ENCODE measurements at regions of chr9 and their contacts with region 1.

Region 1: GRCh38 chr9:34591248-34591916 is 1.9 kb upstream of the CNTFR start:
- DNase-seq: peak; percentile 68
- H3K4me3 Mint-ChIP-seq: no peak overlapping the region
- H3K27ac Mint-ChIP-seq: no peak overlapping the region
- H3K4me1 Mint-ChIP-seq: peaks cover 20% of the 10 kb centered on the region
- H3K27me3 Mint-ChIP-seq: peaks cover 59% of the 10 kb centered on the region
- CTCF ChIP-seq: peak; percentile 94

Region 2: GRCh38 chr9:34437006-34437925 is 154.1 kb before region 1 on chr9:
- CTCF ChIA-PET with region 1: interaction called, 22 read pairs
- POLR2A ChIA-PET with region 1: no interaction called
- intact Hi-C with region 1: loop called (anchors 2 kb)
- DNase-seq: peak; percentile 81
- H3K4me3 Mint-ChIP-seq: no peak overlapping the region
- H3K27ac Mint-ChIP-seq: no peak overlapping the region
- H3K4me1 Mint-ChIP-seq: no peaks in the 10 kb centered on the region
- H3K27me3 Mint-ChIP-seq: no peaks in the 10 kb centered on the region
- CTCF ChIP-seq: peak; percentile 74

Region 3: GRCh38 chr9:34559624-34560452 is 31.5 kb before region 1 on chr9:
- CTCF ChIA-PET with region 1: interaction called, 10 read pairs
- POLR2A ChIA-PET with region 1: no interaction called
- intact Hi-C with region 1: no loop called
- DNase-seq: peak; percentile 50
- H3K4me3 Mint-ChIP-seq: no peak overlapping the region
- H3K27ac Mint-ChIP-seq: no peak overlapping the region
- H3K4me1 Mint-ChIP-seq: peaks cover 7% of the 10 kb centered on the region
- H3K27me3 Mint-ChIP-seq: peaks cover 34% of the 10 kb centered on the region
- CTCF ChIP-seq: no peak

Region 4: DNA sequence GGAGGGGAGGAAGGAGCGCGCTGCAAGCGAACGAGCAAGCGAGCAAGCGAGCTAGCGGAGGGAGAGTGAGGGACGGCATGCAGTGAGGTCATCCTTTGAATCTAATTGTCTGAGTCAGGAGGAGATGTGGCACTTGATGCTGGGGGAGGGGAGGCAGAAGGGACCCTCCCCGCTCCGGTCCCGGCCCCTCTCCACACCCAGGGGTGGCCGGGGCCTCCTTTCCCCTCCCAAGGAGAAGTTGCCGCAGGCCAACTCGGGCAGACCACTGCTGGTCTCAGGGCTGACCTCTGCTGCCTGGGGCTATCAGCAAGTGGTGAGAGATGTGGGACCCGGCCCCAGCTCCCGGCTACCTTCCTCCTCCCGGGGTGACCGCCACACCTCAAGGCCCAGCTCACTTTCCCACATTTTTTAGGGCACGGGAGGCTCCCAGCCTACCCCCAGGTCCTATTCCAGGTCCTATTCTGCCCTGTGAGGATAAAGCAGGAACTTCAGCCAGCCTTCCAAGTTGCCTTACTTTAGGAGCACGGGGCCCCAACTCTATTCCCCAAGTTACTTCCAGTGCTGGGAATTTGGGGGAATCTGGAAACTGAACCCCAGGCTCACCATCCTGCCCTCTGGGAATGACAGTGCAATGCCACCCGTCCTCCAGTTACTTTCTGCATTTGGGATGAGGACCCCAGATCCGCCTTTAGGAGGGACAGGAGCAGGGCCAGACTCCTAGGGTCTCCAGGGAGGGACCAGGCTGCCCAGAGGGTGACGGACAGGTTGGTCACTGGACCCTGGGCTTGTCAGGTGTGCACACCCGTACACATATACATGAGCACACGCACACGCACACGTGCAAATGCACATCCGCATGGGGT is 12.9 kb before region 1 on chr9:
- CTCF ChIA-PET with region 1: interaction called, 35 read pairs
- POLR2A ChIA-PET with region 1: no interaction called
- intact Hi-C with region 1: no loop called
- DNase-seq: no peak
- H3K4me3 Mint-ChIP-seq: no peak overlapping the region
- H3K27ac Mint-ChIP-seq: no peak overlapping the region
- H3K4me1 Mint-ChIP-seq: no peaks in the 10 kb centered on the region
- H3K27me3 Mint-ChIP-seq: peaks cover 44% of the 10 kb centered on the region
- CTCF ChIP-seq: no peak

Region 5: DNA sequence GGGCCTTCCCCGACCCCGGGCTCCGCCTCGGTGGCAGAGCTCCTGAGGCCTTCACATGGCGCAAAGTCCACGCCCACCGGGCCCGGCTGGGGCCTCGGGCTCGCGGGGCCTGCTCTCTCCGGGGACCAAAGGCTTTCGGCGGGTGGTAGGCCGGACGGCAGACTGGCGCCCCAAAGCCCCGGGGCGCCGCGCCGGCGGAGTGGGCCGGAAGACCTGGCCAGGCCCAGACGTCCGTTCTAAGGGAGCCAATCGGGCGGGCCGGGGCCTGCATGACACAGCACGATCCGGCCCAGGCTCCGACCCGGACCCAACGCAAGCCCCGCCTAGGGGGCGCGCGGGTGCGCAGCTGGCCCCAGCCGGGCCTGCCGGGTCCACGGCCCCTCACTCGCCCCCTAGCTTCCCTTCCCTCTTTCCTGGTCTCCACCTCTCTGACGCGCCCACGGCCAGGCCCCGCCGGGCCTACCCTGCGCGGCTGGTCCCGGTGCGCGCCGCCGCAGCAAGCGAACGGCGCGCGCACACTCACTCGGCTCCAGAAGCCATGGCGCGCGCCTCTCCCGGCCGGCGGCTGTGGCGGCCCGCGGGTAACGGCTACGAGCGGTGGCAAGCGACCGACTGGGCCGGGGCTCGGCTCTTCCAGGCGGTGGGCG is 480.6 kb after region 1 on chr9:
- CTCF ChIA-PET with region 1: no interaction called
- POLR2A ChIA-PET with region 1: no interaction called
- intact Hi-C with region 1: no loop called
- DNase-seq: peak; percentile 84
- H3K4me3 Mint-ChIP-seq: peak overlapping the region; percentile 92
- H3K27ac Mint-ChIP-seq: peak overlapping the region; percentile 92
- H3K4me1 Mint-ChIP-seq: peaks cover 22% of the 10 kb centered on the region
- H3K27me3 Mint-ChIP-seq: no peaks in the 10 kb centered on the region
- CTCF ChIP-seq: no peak